ENCODE measurements at regions of chrX and their contacts with region 1.

Region 1: GRCh38 chrX:107646735-107647134 is 18.4 kb downstream of the PRPS1 start:
- DNase-seq: no peak
- H3K4me3 ChIP-seq: no peak overlapping the region
- H3K27ac ChIP-seq: no peak overlapping the region
- H3K4me1 ChIP-seq: no peaks in the 10 kb centered on the region
- H3K27me3 ChIP-seq: no peaks in the 10 kb centered on the region
- CTCF ChIP-seq: no peak

Region 2: GRCh38 chrX:107565931-107566602 is 80.7 kb before region 1 on chrX:
- CTCF ChIA-PET with region 1: no interaction called
- dilution Hi-C with region 1: loop called (anchors 5 kb)
- in situ Hi-C with region 1: no loop called
- intact Hi-C with region 1: no loop called
- DNase-seq: peak; percentile 51
- H3K4me3 ChIP-seq: no peak overlapping the region
- H3K27ac ChIP-seq: no peak overlapping the region
- H3K4me1 ChIP-seq: peaks cover under 1% of the 10 kb centered on the region
- H3K27me3 ChIP-seq: no peaks in the 10 kb centered on the region
- CTCF ChIP-seq: no peak

Region 3: GRCh38 chrX:108064613-108065012 is 417.9 kb after region 1 on chrX:
- CTCF ChIA-PET with region 1: no interaction called
- dilution Hi-C with region 1: no loop called
- in situ Hi-C with region 1: loop called in 1 of 2 experiments (anchors 10 kb)
- intact Hi-C with region 1: no loop called
- DNase-seq: no peak
- H3K4me3 ChIP-seq: no peak overlapping the region
- H3K27ac ChIP-seq: no peak overlapping the region
- H3K4me1 ChIP-seq: peaks cover 10% of the 10 kb centered on the region
- H3K27me3 ChIP-seq: no peaks in the 10 kb centered on the region
- CTCF ChIP-seq: no peak